ENCODE measurements at regions of chr20 and their contacts with region 1.

Region 1: GRCh38 chr20:61662226-61662967 is 403.3 kb downstream of the TAF4 start:
- DNase-seq: no peak
- H3K4me3 ChIP-seq: no peak overlapping the region
- H3K27ac ChIP-seq: peak overlapping the region in 4 of 59 donors; percentile 50 to 76 (median 62)
- H3K27me3 ChIP-seq: no peaks in the 10 kb centered on the region
- CTCF ChIP-seq: peak in 4 of 56 donors; percentile 11 to 21 (median 15)

Region 2: GRCh38 chr20:61621035-61621730 is 41.2 kb before region 1 on chr20:
- intact Hi-C with region 1: loop called in 1 of 2 experiments (anchors 2 kb)
- DNase-seq: peak in 2 of 10 donors; percentile 38 to 43
- H3K4me3 ChIP-seq: peak overlapping the region in 4 of 59 donors; percentile 5 to 28 (median 20)
- H3K27ac ChIP-seq: peak overlapping the region in 27 of 59 donors; percentile 2 to 94 (median 54)
- H3K27me3 ChIP-seq: no peaks in the 10 kb centered on the region
- CTCF ChIP-seq: peak in 2 of 56 donors; percentile 7 to 30

Measured in dorsolateral prefrontal cortex (tissue), 120 donors.